ENCODE measurements at regions of chr9 and their contacts with region 1.

Region 1: GRCh38 chr9:123349691-123350480 is 6.1 kb upstream of the CRB2 start:
- H3K4me3 Mint-ChIP-seq: no peak overlapping the region
- H3K27ac Mint-ChIP-seq: no peak overlapping the region
- H3K4me1 Mint-ChIP-seq: peaks cover 6% of the 10 kb centered on the region
- H3K27me3 Mint-ChIP-seq: peaks cover 22% of the 10 kb centered on the region

Region 2: DNA sequence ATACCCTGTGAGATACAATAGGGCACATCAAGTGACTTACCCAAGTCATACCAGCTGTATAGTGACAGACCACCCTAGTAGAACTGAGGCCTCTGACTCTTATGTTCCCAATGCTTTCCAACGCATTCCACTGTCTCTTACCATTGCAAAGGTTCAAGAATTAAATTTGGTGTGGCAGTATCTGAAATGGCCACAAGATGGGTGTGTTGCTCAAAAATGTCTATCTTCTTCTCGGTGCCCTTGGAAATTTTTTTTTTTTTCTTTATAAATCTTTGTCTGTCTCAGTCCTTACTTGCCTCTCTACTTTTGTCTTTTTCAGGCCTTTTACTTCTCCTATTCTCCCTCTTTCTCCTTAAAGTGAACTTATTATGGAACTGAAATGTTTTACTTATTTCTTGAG is 268.1 kb before region 1 on chr9:
- intact Hi-C with region 1: loop called (anchors 1 kb)
- H3K4me3 Mint-ChIP-seq: no peak overlapping the region
- H3K27ac Mint-ChIP-seq: no peak overlapping the region
- H3K4me1 Mint-ChIP-seq: no peaks in the 10 kb centered on the region
- H3K27me3 Mint-ChIP-seq: no peaks in the 10 kb centered on the region

Region 3: DNA sequence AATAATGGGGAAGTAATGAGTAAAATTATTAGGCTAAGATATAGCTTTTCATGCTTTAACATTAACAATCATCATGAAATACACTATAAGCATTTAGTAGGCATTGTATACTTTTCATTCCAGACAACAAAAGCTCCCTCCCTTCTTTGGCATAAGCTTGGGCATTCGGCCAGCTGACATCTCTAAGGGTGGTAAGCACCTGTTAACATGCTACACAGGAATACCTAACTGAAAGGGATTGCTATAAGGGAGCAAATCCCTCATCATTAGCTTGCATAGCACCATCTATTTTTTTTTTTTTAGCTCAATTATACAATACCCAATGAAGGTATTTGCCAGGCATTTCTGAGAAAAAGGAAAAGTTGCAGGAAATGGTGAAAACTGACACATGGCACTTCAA is 98.1 kb before region 1 on chr9:
- intact Hi-C with region 1: no loop called
- H3K4me3 Mint-ChIP-seq: no peak overlapping the region
- H3K27ac Mint-ChIP-seq: no peak overlapping the region
- H3K4me1 Mint-ChIP-seq: no peaks in the 10 kb centered on the region
- H3K27me3 Mint-ChIP-seq: no peaks in the 10 kb centered on the region

Region 4: DNA sequence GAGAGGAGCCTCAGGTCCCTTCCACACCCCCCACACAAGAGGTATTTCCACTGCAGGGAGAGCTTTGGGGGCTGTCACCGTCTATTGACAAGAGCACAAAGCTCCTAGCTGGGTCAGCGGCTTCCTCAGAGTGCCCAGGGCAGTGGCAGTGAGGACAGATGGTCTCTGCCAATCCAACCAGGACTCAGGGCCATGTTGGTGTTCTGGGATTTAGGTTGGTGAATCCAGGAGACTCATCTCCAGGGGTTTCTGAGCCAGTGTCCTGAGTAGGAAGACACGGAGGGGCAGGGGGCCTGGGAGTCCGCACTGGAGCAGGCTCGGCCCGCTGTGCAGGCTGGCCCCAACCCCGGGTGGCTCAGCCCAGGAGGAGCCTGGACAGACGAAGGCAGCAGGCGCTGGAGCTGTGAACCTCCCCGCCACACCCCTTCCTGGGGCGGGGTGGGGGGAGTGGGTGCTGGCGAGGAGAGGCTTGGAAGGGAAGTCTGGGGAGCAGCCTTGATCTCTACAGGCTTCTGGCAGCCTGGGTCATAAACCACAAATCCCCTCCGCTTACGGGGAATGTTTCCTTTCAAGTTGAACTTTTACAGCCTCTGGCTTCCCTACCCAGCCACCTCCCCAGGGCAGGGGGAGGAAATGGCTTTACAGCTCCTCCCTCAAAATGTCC is 25.7 kb after region 1 on chr9:
- intact Hi-C with region 1: no loop called
- H3K4me3 Mint-ChIP-seq: no peak overlapping the region
- H3K27ac Mint-ChIP-seq: no peak overlapping the region
- H3K4me1 Mint-ChIP-seq: peaks cover 9% of the 10 kb centered on the region
- H3K27me3 Mint-ChIP-seq: peaks cover 52% of the 10 kb centered on the region

Region 5: DNA sequence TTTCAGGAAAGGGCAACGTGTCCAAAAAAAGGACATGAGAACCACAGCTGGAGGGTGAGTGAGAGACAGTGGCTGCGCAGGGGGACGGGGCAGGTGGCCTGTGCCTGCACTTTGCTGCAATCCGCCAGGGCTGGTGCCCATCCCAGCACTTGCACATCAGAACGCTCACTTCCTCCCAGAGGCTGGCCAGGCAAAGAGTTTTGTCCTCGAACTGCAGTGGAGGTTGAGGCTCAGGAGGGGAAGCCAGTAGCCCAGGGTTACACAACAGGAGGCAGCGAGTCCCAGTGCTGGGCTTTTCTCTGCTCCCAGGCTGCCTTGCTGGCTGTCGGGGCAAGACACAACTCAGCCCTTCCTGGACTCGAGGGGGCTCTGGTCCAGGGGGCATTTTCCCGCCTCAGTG is 39.2 kb after region 1 on chr9:
- intact Hi-C with region 1: loop called (anchors 1 kb)
- H3K4me3 Mint-ChIP-seq: no peak overlapping the region
- H3K27ac Mint-ChIP-seq: no peak overlapping the region
- H3K4me1 Mint-ChIP-seq: peaks cover 26% of the 10 kb centered on the region
- H3K27me3 Mint-ChIP-seq: no peaks in the 10 kb centered on the region